ENCODE measurements at regions of chr6 and their contacts with region 1.

Region 1: GRCh38 chr6:152863618-152864326 is 113.2 kb downstream of the VIP start:
- DNase-seq: peak; percentile 67
- ATAC-seq: peak; percentile 58
- H3K4me3 ChIP-seq: no peak overlapping the region
- H3K4me3 Mint-ChIP-seq: no peak overlapping the region
- H3K27ac ChIP-seq: no peak overlapping the region
- H3K27ac Mint-ChIP-seq: no peak overlapping the region
- H3K4me1 ChIP-seq: no peaks in the 10 kb centered on the region
- H3K4me1 Mint-ChIP-seq: no peaks in the 10 kb centered on the region
- H3K27me3 ChIP-seq: peaks cover 0 to 5% (median 0%) of the 10 kb centered on the region in 4 experiments
- H3K27me3 Mint-ChIP-seq: peaks cover 14% of the 10 kb centered on the region
- CTCF ChIP-seq: peak; percentile 85

Region 2: GRCh38 chr6:152948150-152948768 is 84.5 kb after region 1 on chr6:
- CTCF ChIA-PET with region 1: interaction called, 6 read pairs
- POLR2A ChIA-PET with region 1: no interaction called
- intact Hi-C with region 1: loop called (anchors 1 kb)
- DNase-seq: peak; percentile 47
- ATAC-seq: peak; percentile 39
- H3K4me3 ChIP-seq: no peak overlapping the region
- H3K4me3 Mint-ChIP-seq: no peak overlapping the region
- H3K27ac ChIP-seq: no peak overlapping the region
- H3K27ac Mint-ChIP-seq: no peak overlapping the region
- H3K4me1 ChIP-seq: peaks cover 5 to 6% of the 10 kb centered on the region in 2 donors
- H3K4me1 Mint-ChIP-seq: peaks cover 5% of the 10 kb centered on the region
- H3K27me3 ChIP-seq: peaks cover 0 to 4% (median 0%) of the 10 kb centered on the region in 4 experiments
- H3K27me3 Mint-ChIP-seq: peaks cover 28% of the 10 kb centered on the region
- CTCF ChIP-seq: peak; percentile 77

Region 3: GRCh38 chr6:153018359-153018758 is 154.6 kb after region 1 on chr6:
- CTCF ChIA-PET with region 1: interaction called, 20 read pairs
- POLR2A ChIA-PET with region 1: no interaction called
- intact Hi-C with region 1: no loop called
- DNase-seq: no peak
- ATAC-seq: no peak
- H3K4me3 ChIP-seq: no peak overlapping the region
- H3K4me3 Mint-ChIP-seq: no peak overlapping the region
- H3K27ac ChIP-seq: no peak overlapping the region
- H3K27ac Mint-ChIP-seq: no peak overlapping the region
- H3K4me1 ChIP-seq: no peaks in the 10 kb centered on the region
- H3K4me1 Mint-ChIP-seq: no peaks in the 10 kb centered on the region
- H3K27me3 ChIP-seq: peaks cover 0 to 4% (median 0%) of the 10 kb centered on the region in 4 experiments
- H3K27me3 Mint-ChIP-seq: peaks cover 28% of the 10 kb centered on the region
- CTCF ChIP-seq: no peak

Region 4: GRCh38 chr6:153023977-153024708 is 160.4 kb after region 1 on chr6:
- CTCF ChIA-PET with region 1: interaction called, 20 read pairs
- POLR2A ChIA-PET with region 1: no interaction called
- intact Hi-C with region 1: loop called (anchors 1 kb)
- DNase-seq: peak; percentile 74
- ATAC-seq: peak; percentile 81
- H3K4me3 ChIP-seq: no peak overlapping the region
- H3K4me3 Mint-ChIP-seq: no peak overlapping the region
- H3K27ac ChIP-seq: no peak overlapping the region
- H3K27ac Mint-ChIP-seq: no peak overlapping the region
- H3K4me1 ChIP-seq: peaks cover 0 to 3% of the 10 kb centered on the region in 2 donors
- H3K4me1 Mint-ChIP-seq: no peaks in the 10 kb centered on the region
- H3K27me3 ChIP-seq: peaks cover 0 to 4% (median 0%) of the 10 kb centered on the region in 4 experiments
- H3K27me3 Mint-ChIP-seq: peaks cover 28% of the 10 kb centered on the region
- CTCF ChIP-seq: peak; percentile 91

Region 5: GRCh38 chr6:153511896-153512496 is 648.2 kb after region 1 on chr6:
- CTCF ChIA-PET with region 1: no interaction called
- POLR2A ChIA-PET with region 1: no interaction called
- intact Hi-C with region 1: loop called (anchors 5 kb)
- DNase-seq: no peak
- ATAC-seq: peak; percentile 33
- H3K4me3 ChIP-seq: no peak overlapping the region
- H3K4me3 Mint-ChIP-seq: no peak overlapping the region
- H3K27ac ChIP-seq: no peak overlapping the region
- H3K27ac Mint-ChIP-seq: no peak overlapping the region
- H3K4me1 ChIP-seq: no peaks in the 10 kb centered on the region
- H3K4me1 Mint-ChIP-seq: no peaks in the 10 kb centered on the region
- H3K27me3 ChIP-seq: no peaks in the 10 kb centered on the region
- H3K27me3 Mint-ChIP-seq: no peaks in the 10 kb centered on the region
- CTCF ChIP-seq: peak; percentile 56